ENCODE measurements at regions of chr1 and their contacts with region 1.

Region 1: GRCh38 chr1:100868364-100868995 is 26.2 kb downstream of the EXTL2 start:
- DNase-seq: peak; percentile 25
- H3K27ac ChIP-seq: no peak overlapping the region
- CTCF ChIP-seq: peak; percentile 77

Region 2: GRCh38 chr1:100463809-100464424 is 404.6 kb before region 1 on chr1:
- CTCF ChIA-PET with region 1: interaction called, 15 read pairs
- POLR2A ChIA-PET with region 1: no interaction called
- DNase-seq: peak; percentile 48
- H3K27ac ChIP-seq: no peak overlapping the region
- CTCF ChIP-seq: peak; percentile 72